CD14-positive monocyte (primary cell): ENCODE measurements at regions of chr4 and their contacts with region 1.

Region 1: GRCh38 chr4:69689599-69689998 is 36.6 kb upstream of the UGT2A1 start:
- DNase-seq: peak; percentile 38 to 63 (median 49)
- H3K4me3 ChIP-seq: peak overlapping the region in 1 of 3 experiments; percentile 47
- H3K4me3 Mint-ChIP-seq: no peak overlapping the region
- H3K27ac ChIP-seq: no peak overlapping the region
- H3K27ac Mint-ChIP-seq: no peak overlapping the region
- H3K4me1 ChIP-seq: peaks cover 0 to 5% of the 10 kb centered on the region in 2 donors
- H3K4me1 Mint-ChIP-seq: peaks cover 6% of the 10 kb centered on the region
- H3K27me3 ChIP-seq: no peaks in the 10 kb centered on the region
- H3K27me3 Mint-ChIP-seq: peaks cover 0 to 4% (median 4%) of the 10 kb centered on the region in 3 donors
- CTCF ChIP-seq: peak; percentile 83

Region 2: DNA sequence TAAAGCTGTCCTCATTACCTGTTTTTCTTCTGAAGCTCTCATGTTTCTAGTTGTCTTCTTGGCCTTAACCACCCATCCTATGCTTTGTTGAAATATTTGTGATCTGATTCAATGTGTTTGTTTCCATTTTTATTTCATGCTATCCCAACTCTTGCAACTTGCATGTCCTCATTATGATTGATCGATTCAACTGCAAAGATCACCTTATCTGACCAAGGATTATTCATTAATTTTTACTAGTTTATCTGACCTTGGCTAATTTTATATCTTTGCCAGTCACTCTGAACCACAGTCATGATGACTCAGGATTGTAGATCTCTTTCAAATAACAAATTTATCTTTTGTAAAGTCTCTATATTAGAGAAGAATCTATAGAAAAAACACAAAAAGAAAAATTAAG is 120.8 kb before region 1 on chr4:
- intact Hi-C with region 1: no loop called
- DNase-seq: no peak
- H3K4me3 ChIP-seq: no peak overlapping the region
- H3K4me3 Mint-ChIP-seq: no peak overlapping the region
- H3K27ac ChIP-seq: no peak overlapping the region
- H3K27ac Mint-ChIP-seq: no peak overlapping the region
- H3K4me1 ChIP-seq: no peaks in the 10 kb centered on the region
- H3K4me1 Mint-ChIP-seq: no peaks in the 10 kb centered on the region
- H3K27me3 ChIP-seq: no peaks in the 10 kb centered on the region
- H3K27me3 Mint-ChIP-seq: no peaks in the 10 kb centered on the region
- CTCF ChIP-seq: no peak

Region 3: GRCh38 chr4:69601065-69601464 is 88.5 kb before region 1 on chr4:
- intact Hi-C with region 1: no loop called
- DNase-seq: no peak
- H3K4me3 ChIP-seq: no peak overlapping the region
- H3K4me3 Mint-ChIP-seq: no peak overlapping the region
- H3K27ac ChIP-seq: no peak overlapping the region
- H3K27ac Mint-ChIP-seq: peak overlapping the region in 1 of 7 donors; percentile 22
- H3K4me1 ChIP-seq: no peaks in the 10 kb centered on the region
- H3K4me1 Mint-ChIP-seq: no peaks in the 10 kb centered on the region
- H3K27me3 ChIP-seq: no peaks in the 10 kb centered on the region
- H3K27me3 Mint-ChIP-seq: peaks cover 0 to 2% (median 0%) of the 10 kb centered on the region in 3 donors
- CTCF ChIP-seq: no peak

Region 4: GRCh38 chr4:69881173-69881773 is 191.7 kb after region 1 on chr4:
- intact Hi-C with region 1: loop called (anchors 5 kb)
- DNase-seq: peak; percentile 46 to 72 (median 61)
- H3K4me3 ChIP-seq: no peak overlapping the region
- H3K4me3 Mint-ChIP-seq: no peak overlapping the region
- H3K27ac ChIP-seq: no peak overlapping the region
- H3K27ac Mint-ChIP-seq: no peak overlapping the region
- H3K4me1 ChIP-seq: no peaks in the 10 kb centered on the region
- H3K4me1 Mint-ChIP-seq: peaks cover 5% of the 10 kb centered on the region
- H3K27me3 ChIP-seq: no peaks in the 10 kb centered on the region
- H3K27me3 Mint-ChIP-seq: no peaks in the 10 kb centered on the region
- CTCF ChIP-seq: peak; percentile 88

Region 5: GRCh38 chr4:70505151-70505748 is 815.7 kb after region 1 on chr4:
- intact Hi-C with region 1: loop called in 1 of 2 experiments (anchors 5 kb)
- DNase-seq: peak; percentile 0 to 16 (median 14)
- H3K4me3 ChIP-seq: no peak overlapping the region
- H3K4me3 Mint-ChIP-seq: no peak overlapping the region
- H3K27ac ChIP-seq: no peak overlapping the region
- H3K27ac Mint-ChIP-seq: no peak overlapping the region
- H3K4me1 ChIP-seq: no peaks in the 10 kb centered on the region
- H3K4me1 Mint-ChIP-seq: no peaks in the 10 kb centered on the region
- H3K27me3 ChIP-seq: no peaks in the 10 kb centered on the region
- H3K27me3 Mint-ChIP-seq: peaks cover 2 to 5% (median 3%) of the 10 kb centered on the region in 3 donors
- CTCF ChIP-seq: peak; percentile 93